Vagina (tissue), 2 donors: ENCODE measurements at regions of chr3 and their contacts with region 1.

Region 1: DNA sequence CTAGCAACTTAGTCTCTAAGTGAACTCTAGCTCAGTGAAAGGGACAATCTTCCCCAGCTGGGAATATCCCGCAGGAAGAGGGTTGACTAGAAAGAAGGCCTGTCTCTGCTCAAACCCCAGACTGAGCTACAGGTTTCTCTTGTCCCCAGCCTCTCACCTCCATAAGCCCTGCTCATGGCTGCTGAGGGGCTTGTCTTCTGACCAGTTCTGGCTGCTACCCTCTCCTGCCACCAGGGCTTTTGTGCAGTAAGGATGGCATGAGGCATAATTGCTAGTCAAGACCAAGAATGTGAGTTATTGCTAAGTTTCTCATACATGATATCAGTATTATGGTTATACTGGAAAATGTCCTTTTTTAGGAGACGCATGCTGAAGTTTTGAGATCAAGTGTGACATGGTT is 21.3 kb downstream of the WDR53 start:
- DNase-seq: no peak
- H3K4me3 ChIP-seq: no peak overlapping the region
- H3K27ac ChIP-seq: no peak overlapping the region
- H3K4me1 ChIP-seq: no peaks in the 10 kb centered on the region
- H3K27me3 ChIP-seq: no peaks in the 10 kb centered on the region
- CTCF ChIP-seq: no peak
- POLR2A ChIP-seq: no peak

Region 2: DNA sequence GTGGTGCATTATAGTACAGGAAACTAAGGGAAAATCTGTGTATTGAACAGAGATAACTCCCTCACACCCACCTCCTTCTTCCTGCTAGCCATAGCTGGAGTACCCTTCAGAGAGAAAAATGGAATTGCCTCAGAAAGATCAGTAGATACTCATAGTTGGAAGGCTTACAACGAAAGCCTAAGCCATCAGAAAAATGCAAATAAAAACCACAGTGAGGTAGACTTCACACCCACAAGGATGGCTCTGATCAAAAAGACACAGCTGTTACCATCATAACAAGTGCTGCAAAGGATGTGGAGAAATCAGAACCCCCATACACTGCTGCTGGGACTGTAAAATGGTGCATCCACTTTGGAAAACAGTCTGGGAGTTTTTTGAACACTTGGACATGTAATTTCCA is 758.8 kb after region 1 on chr3:
- intact Hi-C with region 1: loop called (anchors 10 kb)
- DNase-seq: no peak
- H3K4me3 ChIP-seq: no peak overlapping the region
- H3K27ac ChIP-seq: no peak overlapping the region
- H3K4me1 ChIP-seq: peaks cover 39% of the 10 kb centered on the region
- H3K27me3 ChIP-seq: no peaks in the 10 kb centered on the region
- CTCF ChIP-seq: no peak
- POLR2A ChIP-seq: no peak